A549 (cell line): ENCODE measurements at regions of chr11 and their contacts with region 1.

Region 1: GRCh38 chr11:1351278-1351937 is 38.3 kb upstream of the BRSK2 start:
- DNase-seq: peak in 1 of 2 experiments; percentile 71
- ATAC-seq: peak in 1 of 2 experiments; percentile 21; a peak in 1 of 6 replicates
- H3K4me3 ChIP-seq: no peak overlapping the region
- H3K27ac ChIP-seq: no peak overlapping the region
- H3K4me1 ChIP-seq: no peaks in the 10 kb centered on the region
- CTCF ChIP-seq: no peak
- EP300 ChIP-seq: no peak
- POLR2A ChIP-seq: peak; percentile 39
- RAD21 ChIP-seq: no peak

Region 2: DNA sequence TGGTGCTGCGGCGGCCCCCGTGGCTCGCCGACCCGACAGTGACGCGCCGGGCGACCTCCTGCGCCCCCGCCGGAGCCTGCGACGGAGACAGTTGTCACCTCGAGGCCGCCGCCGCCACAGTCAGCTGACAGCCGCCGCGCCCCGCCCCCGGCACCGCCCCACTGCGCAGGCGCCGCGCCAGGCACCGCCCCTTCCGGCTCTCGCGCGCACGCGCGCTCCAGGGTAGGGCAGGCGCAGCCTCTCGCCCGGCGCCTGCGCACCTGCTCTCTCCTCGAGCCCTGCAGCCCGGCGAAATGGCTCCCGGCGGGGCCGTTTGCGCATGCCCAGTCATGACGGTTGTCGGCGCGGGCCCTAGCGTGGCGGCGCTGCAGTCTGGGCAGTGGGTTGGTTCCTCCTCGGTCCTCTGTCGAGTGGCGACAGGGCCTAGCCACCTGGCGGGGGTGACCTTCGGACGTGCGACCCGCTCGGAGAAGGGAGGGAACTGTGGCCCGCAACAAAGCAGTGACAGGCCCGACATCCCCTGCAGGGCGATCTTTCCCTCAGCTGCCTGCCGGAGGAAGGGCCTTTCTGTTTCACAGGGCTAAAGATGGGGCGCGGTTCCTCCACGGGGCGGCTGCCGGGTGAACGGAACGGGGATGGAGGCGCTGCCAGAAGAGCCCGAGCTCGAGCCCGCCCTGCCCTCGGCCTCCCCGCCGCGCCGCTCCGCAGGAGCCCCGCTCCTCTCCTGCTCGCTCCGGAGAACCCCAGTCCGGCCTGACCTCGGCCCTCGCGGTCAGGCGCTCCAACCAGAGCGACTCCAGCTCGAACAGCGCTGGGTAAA is 41.7 kb before region 1 on chr11 and contains the start of gene TOLLIP:
- CTCF ChIA-PET with region 1: no interaction called
- POLR2A ChIA-PET with region 1: no interaction called
- DNase-seq: peak; percentile 92 to 99
- ATAC-seq: peak; percentile 91 to 92
- H3K4me3 ChIP-seq: peak within 1 kb of the TSS; percentile 93
- H3K27ac ChIP-seq: peak within 1 kb of the TSS; percentile 88 to 91
- H3K4me1 ChIP-seq: peaks cover 22% of the 10 kb centered on the region
- CTCF ChIP-seq: 0 out of 3 replicates have a peak, but pooled peaks have one; percentile 9
- EP300 ChIP-seq: no peak
- POLR2A ChIP-seq: peak; percentile 90
- RAD21 ChIP-seq: peak; percentile 14 to 44; a peak in 2 of 5 replicates
- polyA plus RNA-seq, gene TOLLIP: 26.5 and 26.9 TPM in 2 replicates

Region 3: GRCh38 chr11:1382831-1383607 is 31.6 kb after region 1 on chr11:
- CTCF ChIA-PET with region 1: no interaction called
- POLR2A ChIA-PET with region 1: interaction called, 11 read pairs
- DNase-seq: peak; percentile 80 to 90
- ATAC-seq: peak; percentile 91 to 96
- H3K4me3 ChIP-seq: peak overlapping the region; percentile 60
- H3K27ac ChIP-seq: peak overlapping the region; percentile 90 to 100
- H3K4me1 ChIP-seq: peaks cover 10% of the 10 kb centered on the region
- CTCF ChIP-seq: no peak
- EP300 ChIP-seq: no peak
- POLR2A ChIP-seq: peak; percentile 57; the same call in 1 of the 2 replicates
- RAD21 ChIP-seq: no peak; a peak in 1 of 5 replicates